ENCODE measurements at regions of chr3 and their contacts with region 1.

Region 1: DNA sequence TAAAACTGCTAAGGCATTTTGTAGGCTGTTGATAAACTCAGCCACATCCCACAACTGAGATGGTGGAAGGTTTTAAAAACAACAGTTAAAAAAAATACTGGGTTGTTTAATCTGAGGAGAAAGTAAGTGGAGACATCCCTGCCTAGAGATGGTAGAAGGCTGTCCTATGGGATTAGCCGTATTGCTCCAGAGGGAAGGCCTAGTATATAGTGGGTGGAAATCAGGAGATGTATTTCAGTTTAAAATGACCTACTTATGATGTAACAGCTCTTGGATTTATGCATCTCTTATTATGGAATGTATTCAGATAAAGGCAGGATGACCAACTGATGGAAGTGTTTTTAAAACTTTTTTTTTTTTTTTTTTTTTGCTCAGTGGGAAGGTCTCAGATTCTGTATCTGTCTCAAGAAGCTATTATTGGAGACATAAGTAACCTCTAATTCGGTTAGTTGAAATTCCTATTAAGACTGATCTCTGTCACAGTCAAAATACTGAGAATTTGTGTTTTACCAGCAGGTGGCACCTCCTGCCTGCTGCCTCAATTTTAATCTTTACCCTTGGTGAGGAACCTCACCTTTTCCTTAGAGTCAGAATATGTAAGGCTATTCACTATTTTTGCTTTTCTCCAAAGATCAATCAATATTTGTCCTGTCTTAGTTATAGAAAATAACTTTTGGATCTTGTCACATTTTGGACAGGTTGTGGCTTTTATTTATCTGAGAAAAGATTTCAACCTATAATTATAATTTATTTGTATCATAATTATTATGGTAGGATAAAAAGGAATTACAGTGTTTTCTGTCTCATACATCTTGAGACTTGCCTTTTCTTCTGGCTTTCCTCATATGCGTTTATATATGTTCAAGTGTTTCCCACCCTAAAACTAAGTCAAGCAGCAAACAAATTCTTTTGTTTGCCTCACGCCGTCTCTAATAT is 63.0 kb downstream of the VPS8 start:
- DNase-seq: peak in 1 of 2 donors; percentile 24
- ATAC-seq: no peak
- H3K4me3 ChIP-seq: no peak overlapping the region
- H3K4me3 Mint-ChIP-seq: no peak overlapping the region
- H3K27ac ChIP-seq: no peak overlapping the region
- H3K27ac Mint-ChIP-seq: no peak overlapping the region
- H3K4me1 ChIP-seq: no peaks in the 10 kb centered on the region
- H3K4me1 Mint-ChIP-seq: peaks cover 0 to 4% of the 10 kb centered on the region in 2 donors
- H3K27me3 ChIP-seq: no peaks in the 10 kb centered on the region
- H3K27me3 Mint-ChIP-seq: no peaks in the 10 kb centered on the region
- CTCF ChIP-seq: no peak

Region 2: GRCh38 chr3:185308126-185308754 is 433.3 kb after region 1 on chr3:
- intact Hi-C with region 1: loop called (anchors 5 kb)
- DNase-seq: peak in 1 of 2 donors; percentile 67
- ATAC-seq: peak; percentile 46 to 62 (median 61)
- H3K4me3 ChIP-seq: no peak overlapping the region
- H3K4me3 Mint-ChIP-seq: no peak overlapping the region
- H3K27ac ChIP-seq: no peak overlapping the region
- H3K27ac Mint-ChIP-seq: no peak overlapping the region
- H3K4me1 ChIP-seq: no peaks in the 10 kb centered on the region
- H3K4me1 Mint-ChIP-seq: no peaks in the 10 kb centered on the region
- H3K27me3 ChIP-seq: no peaks in the 10 kb centered on the region
- H3K27me3 Mint-ChIP-seq: no peaks in the 10 kb centered on the region
- CTCF ChIP-seq: peak; percentile 78